Dendritic cell treated with granulocyte-macrophage colony-stimulating factor and Interleukin-4, amounts not matched to agents 40 ng/mL and 50 ng/mL, for 4 days (primary cell): ENCODE measurements at regions of chr15 and their contacts with region 1.

Region 1: DNA sequence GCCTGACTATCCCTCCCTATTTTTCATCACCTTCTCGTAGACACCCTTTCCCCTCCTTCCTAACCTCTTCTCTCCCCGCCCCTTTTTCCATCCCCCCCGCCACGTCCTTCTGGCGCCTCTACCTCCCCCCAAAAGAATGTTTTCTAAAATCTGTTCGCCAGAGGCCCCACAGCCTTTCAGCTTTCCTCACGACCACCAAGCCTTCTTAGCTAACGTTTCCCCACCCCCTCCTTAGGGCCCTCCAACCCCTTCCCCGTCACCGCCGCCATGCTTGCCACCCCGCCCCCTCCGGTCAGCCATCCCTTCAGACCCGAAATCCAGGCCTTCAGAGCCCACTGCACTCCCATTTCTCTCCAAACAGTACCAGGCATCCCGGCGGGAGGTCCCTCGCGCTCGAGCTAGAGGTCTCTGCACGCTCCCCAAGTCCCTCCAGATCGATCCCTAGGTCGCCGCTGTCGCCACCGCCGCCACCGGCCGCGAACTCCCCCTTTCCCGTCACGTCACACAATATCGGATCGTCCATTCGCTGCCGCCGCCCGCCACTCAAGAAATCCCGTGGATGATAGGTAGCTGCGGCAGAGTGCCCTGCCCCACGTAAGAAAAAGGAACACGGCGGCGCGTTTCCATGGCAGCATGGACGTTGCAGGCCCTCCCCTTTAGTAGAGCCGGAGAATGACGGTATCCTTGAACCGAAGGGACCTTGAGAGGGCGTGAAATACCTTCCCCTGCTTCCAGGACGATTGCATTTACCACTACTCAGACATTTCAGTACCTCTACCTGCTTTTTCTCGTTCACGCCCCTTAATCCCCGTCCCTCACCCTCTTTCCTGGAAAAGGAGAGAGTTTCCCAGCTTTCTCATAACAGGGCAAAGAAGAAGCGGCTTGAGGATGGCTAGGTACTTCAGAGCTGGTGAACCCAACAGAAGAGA is at the start of gene TP53BP1:
- H3K4me3 Mint-ChIP-seq: peak within 1 kb of the TSS; percentile 93
- H3K27ac Mint-ChIP-seq: peak within 1 kb of the TSS; percentile 86
- H3K4me1 Mint-ChIP-seq: peaks cover 9% of the 10 kb centered on the region
- H3K27me3 Mint-ChIP-seq: no peaks in the 10 kb centered on the region

Region 2: GRCh38 chr15:43510200-43511011 is 17.5 kb after region 1 on chr15:
- intact Hi-C with region 1: loop called (anchors 1 kb)
- H3K4me3 Mint-ChIP-seq: peak overlapping the region; percentile 83
- H3K27ac Mint-ChIP-seq: peak overlapping the region; percentile 97
- H3K4me1 Mint-ChIP-seq: peaks cover 34% of the 10 kb centered on the region
- H3K27me3 Mint-ChIP-seq: peaks cover 17% of the 10 kb centered on the region

Region 3: DNA sequence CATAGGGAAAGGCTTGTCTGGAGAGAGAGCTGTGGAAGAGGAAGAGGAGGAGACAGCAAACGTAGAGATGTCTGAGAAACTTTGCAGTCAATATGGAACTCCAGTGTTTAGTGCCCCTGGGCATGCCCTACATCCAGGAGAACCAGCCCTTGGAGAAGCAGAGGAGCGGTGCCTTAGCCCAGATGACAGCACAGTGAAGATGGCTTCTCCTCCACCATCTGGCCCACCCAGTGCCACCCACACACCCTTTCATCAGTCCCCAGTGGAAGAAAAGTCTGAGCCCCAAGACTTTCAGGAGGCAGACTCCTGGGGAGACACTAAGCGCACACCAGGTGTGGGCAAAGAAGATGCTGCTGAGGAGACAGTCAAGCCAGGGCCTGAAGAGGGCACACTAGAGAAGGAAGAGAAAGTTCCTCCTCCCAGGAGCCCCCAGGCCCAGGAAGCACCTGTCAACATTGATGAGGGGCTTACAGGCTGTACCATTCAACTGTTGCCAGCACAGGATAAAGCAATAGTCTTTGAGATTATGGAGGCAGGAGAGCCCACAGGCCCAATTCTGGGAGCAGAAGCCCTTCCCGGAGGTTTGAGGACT is 31.4 kb after region 1 on chr15:
- intact Hi-C with region 1: loop called (anchors 5 kb)
- H3K4me3 Mint-ChIP-seq: no peak overlapping the region
- H3K27ac Mint-ChIP-seq: no peak overlapping the region
- H3K4me1 Mint-ChIP-seq: peaks cover 13% of the 10 kb centered on the region
- H3K27me3 Mint-ChIP-seq: peaks cover 6% of the 10 kb centered on the region